PC-9 (cell line): ENCODE measurements at regions of chr1 and their contacts with region 1.

Region 1: DNA sequence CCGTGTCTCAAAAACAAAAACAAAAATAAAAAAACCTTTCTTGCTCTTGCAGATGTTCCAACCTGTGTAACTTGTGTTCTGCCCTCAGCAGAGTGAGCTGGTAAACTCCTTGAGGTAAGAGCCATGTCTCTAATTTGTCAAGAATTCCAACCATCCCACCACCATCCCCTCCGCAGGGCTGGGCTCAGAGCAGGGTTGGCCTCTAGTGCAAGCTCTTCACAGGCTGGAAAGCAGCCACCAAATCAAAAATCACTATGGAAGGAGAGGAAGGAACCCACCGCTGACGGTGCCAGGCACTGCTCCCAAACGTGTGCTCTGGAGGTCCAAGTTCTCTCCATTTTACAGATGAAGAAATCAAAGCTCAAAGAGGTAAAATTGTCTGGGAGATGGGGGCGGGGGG is 9.4 kb downstream of the PLEKHA6 start:
- DNase-seq: no peak
- H3K4me3 ChIP-seq: no peak overlapping the region
- H3K27ac ChIP-seq: no peak overlapping the region
- H3K4me1 ChIP-seq: peaks cover 6% of the 10 kb centered on the region; the same call in 1 of the 2 replicates
- H3K27me3 ChIP-seq: no peaks in the 10 kb centered on the region
- CTCF ChIP-seq: no peak

Region 2: GRCh38 chr1:204323887-204324286 is 26.4 kb before region 1 on chr1:
- CTCF ChIA-PET with region 1: no interaction called
- POLR2A ChIA-PET with region 1: no interaction called
- intact Hi-C with region 1: no loop called
- DNase-seq: peak in 1 of 2 experiments; percentile 61
- H3K4me3 ChIP-seq: no peak overlapping the region
- H3K27ac ChIP-seq: 0 out of 2 replicates have a peak overlapping the region, but pooled peaks have one; percentile 3
- H3K4me1 ChIP-seq: peaks cover 51% of the 10 kb centered on the region
- H3K27me3 ChIP-seq: no peaks in the 10 kb centered on the region
- CTCF ChIP-seq: no peak

Region 3: DNA sequence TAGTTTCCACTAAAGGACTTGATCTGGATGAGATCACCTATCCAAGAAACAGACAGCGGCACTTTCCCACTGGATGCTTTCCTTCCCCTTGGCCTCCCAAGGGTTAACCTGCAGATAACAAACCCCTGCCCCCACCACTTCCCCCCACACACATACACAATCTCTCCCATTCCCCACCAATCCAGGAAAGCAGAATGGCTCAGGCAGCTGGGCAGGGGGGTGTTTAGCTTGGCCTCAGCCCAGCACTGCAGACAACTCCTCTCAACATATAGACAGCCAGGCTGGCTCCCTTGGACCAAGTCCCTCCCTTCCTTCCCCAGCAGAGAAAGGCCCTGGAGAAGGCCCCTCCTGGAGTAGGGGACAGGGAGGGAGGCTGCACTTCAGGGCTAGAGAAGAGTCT is 15.2 kb before region 1 on chr1:
- CTCF ChIA-PET with region 1: interaction called, 12 read pairs
- POLR2A ChIA-PET with region 1: no interaction called
- intact Hi-C with region 1: no loop called
- DNase-seq: no peak
- H3K4me3 ChIP-seq: no peak overlapping the region
- H3K27ac ChIP-seq: no peak overlapping the region
- H3K4me1 ChIP-seq: peaks cover 20% of the 10 kb centered on the region
- H3K27me3 ChIP-seq: no peaks in the 10 kb centered on the region
- CTCF ChIP-seq: no peak

Region 4: GRCh38 chr1:204461331-204462228 is 111.3 kb after region 1 on chr1:
- CTCF ChIA-PET with region 1: no interaction called
- POLR2A ChIA-PET with region 1: no interaction called
- intact Hi-C with region 1: no loop called
- DNase-seq: no peak
- H3K4me3 ChIP-seq: no peak overlapping the region
- H3K27ac ChIP-seq: no peak overlapping the region
- H3K4me1 ChIP-seq: no peaks in the 10 kb centered on the region
- H3K27me3 ChIP-seq: no peaks in the 10 kb centered on the region
- CTCF ChIP-seq: no peak